CD4-positive, alpha-beta memory T cell (primary cell): ENCODE measurements at regions of chr12 and their contacts with region 1.

Region 1: DNA sequence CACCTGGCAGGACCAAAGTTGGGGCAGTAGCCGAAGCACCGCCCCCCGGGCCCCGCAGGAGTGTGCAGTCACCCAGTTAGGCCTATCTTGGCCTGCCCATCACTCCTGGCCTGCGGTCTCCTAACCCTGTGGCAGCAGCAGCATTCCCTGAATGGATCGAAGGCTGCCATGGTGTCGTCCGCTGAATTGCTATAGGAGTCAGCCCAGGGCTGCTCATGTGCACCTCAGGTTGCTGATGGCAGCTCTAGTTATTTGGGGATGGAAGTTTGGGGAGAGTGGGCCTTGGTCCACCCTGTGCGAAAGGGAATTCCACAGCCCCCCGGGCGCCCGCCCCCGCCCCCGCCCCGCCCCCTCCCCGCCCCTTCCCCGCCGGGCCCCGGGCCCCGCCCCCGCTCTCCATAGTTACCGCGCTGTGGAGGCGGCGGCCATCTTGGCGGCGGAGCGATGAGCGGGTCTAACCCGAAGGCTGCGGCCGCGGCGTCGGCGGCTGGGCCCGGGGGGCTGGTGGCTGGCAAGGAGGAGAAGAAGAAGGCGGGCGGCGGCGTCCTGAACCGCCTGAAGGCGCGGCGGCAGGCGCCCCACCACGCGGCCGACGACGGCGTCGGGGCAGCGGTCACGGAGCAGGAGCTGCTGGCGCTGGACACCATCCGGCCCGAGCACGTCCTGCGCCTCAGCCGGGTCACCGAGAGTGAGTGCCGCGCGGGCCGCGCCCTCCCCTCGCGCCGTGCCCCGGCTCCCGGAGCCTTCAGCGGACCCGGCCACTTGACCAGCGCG is at the start of gene UNC119B:
- DNase-seq: peak; percentile 66 to 78 (median 70)
- H3K4me3 ChIP-seq: peak within 1 kb of the TSS; percentile 49 to 68
- H3K4me3 Mint-ChIP-seq: peak within 1 kb of the TSS; percentile 89 to 96 (median 94)
- H3K27ac ChIP-seq: peak within 1 kb of the TSS; percentile 78
- H3K27ac Mint-ChIP-seq: peak within 1 kb of the TSS; percentile 83 to 98 (median 93)
- H3K4me1 ChIP-seq: peaks cover 26% of the 10 kb centered on the region
- H3K4me1 Mint-ChIP-seq: peaks cover 17 to 41% (median 32%) of the 10 kb centered on the region in 4 donors
- H3K27me3 ChIP-seq: no peaks in the 10 kb centered on the region
- H3K27me3 Mint-ChIP-seq: no peaks in the 10 kb centered on the region
- total RNA-seq, gene UNC119B: 28.7 to 29.1 TPM

Region 2: DNA sequence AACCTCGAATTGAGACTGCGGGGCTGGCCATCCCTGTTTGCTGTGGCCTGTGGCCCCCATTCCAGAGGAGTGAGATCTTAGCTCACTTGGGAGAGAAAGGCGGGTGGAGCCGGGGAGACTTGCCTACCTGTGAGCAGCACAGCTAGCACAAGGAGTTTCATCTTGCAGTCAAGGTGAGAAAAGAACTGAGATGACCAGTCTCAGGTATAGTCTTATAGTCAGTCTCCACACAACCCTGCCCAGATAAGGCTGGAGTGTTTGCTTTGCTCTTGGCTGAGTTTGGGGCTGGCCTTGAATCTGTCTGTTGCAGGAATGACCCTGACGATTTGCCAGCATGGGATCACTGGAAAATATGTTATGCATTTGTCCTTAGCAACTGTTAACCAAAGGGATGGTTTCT is 382.6 kb before region 1 on chr12 and contains the start of gene PLA2G1B:
- CTCF ChIA-PET with region 1: no interaction called
- POLR2A ChIA-PET with region 1: no interaction called
- intact Hi-C with region 1: loop called (anchors 5 kb)
- DNase-seq: no peak
- H3K4me3 ChIP-seq: no peak within 1 kb of the TSS
- H3K4me3 Mint-ChIP-seq: peak within 1 kb of the TSS in 1 of 8 donors; percentile 10
- H3K27ac ChIP-seq: no peak within 1 kb of the TSS
- H3K27ac Mint-ChIP-seq: no peak within 1 kb of the TSS
- H3K4me1 ChIP-seq: no peaks in the 10 kb centered on the region
- H3K4me1 Mint-ChIP-seq: peaks cover 3 to 8% (median 6%) of the 10 kb centered on the region in 4 donors
- H3K27me3 ChIP-seq: no peaks in the 10 kb centered on the region
- H3K27me3 Mint-ChIP-seq: peaks cover 1 to 3% of the 10 kb centered on the region in 2 donors
- total RNA-seq, gene PLA2G1B: not detected

Region 3: DNA sequence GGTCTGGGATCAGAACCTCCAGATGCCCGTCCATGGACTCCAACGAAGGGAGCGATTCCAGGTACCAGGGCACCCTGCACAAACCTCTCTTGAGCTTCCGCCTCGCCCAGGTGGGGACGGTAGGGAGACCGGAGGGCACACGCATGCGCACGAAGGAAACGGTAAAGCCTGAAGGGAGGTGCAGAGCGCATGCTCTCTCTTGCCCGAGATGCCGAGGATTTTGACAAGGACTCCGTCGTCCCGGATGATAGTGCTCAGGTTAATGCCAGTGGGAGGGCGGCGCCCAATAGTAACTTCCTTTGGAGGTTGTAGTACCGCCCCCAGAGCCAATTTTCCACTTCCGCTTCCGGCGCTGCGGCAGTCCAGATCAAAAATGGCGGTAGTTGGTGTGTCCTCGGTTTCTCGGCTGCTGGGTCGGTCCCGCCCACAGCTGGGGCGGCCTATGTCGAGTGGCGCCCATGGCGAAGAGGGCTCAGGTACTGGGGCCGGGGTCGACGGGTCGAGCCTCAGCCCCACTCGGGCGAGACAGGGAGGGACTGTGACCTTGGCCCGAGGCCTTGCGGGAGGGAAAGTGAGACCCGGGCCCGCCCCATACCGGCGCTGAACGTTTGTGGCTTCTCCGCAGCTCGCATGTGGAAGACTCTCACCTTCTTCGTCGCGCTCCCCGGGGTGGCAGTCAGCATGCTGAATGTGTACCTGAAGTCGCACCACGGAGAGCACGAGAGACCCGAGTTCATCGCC is 272.3 kb before region 1 on chr12 and contains the start of gene COX6A1:
- CTCF ChIA-PET with region 1: no interaction called
- POLR2A ChIA-PET with region 1: no interaction called
- intact Hi-C with region 1: loop called (anchors 10 kb)
- DNase-seq: peak; percentile 94 to 99 (median 98)
- H3K4me3 ChIP-seq: peak within 1 kb of the TSS; percentile 52 to 70
- H3K4me3 Mint-ChIP-seq: peak within 1 kb of the TSS; percentile 92 to 99 (median 96)
- H3K27ac ChIP-seq: peak within 1 kb of the TSS; percentile 76
- H3K27ac Mint-ChIP-seq: peak within 1 kb of the TSS; percentile 86 to 99 (median 96)
- H3K4me1 ChIP-seq: peaks cover 26% of the 10 kb centered on the region
- H3K4me1 Mint-ChIP-seq: peaks cover 18 to 31% (median 27%) of the 10 kb centered on the region in 4 donors
- H3K27me3 ChIP-seq: no peaks in the 10 kb centered on the region
- H3K27me3 Mint-ChIP-seq: peaks cover under 1 to 3% of the 10 kb centered on the region in 2 donors
- total RNA-seq, gene COX6A1: 144 to 158 TPM

Region 4: DNA sequence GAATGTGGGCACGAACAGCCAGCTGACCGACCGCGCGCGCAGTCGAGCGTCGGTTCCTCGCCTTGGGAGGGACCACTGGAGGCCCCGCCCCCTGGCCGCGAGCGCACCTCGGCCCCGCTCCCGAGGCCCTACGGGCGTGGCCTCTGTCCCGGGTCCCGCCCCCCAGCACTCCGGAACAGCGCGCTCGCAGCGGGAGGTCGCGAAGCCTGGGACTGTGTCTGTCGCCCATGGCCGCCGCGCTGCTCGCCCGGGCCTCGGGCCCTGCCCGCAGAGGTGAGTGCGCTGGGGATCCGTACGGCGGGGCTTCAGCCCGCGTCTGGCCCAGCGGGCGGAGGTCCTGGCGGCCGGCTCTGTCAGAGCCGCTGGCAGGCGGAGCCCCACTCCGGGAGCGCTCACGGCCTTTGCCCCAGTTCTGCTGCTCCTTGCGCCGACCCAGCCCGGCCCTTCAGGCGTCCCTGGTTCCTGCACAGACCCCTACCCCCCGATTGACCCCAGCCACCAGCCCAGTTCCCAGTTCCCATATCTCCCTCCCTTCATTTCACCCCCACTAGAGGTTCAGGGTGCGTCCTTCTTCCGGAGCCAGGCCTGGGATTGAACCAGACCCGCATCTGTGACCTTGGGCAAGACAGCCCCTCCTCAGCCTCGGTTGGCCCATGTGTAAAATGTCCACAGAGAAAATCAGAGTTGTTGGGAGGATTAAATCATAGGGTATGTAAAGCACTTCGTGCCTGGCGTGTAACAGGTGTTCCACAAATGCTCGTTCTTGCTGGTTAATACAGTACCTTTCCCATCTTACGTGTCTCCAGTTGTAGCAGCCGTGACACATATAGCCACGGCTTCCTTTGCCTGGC is 15.7 kb after region 1 on chr12 and contains the start of gene ACADS:
- CTCF ChIA-PET with region 1: interaction called, 5 read pairs
- POLR2A ChIA-PET with region 1: interaction called, 5 read pairs
- intact Hi-C with region 1: loop called (anchors 1 kb)
- DNase-seq: peak; percentile 84 to 87 (median 86)
- H3K4me3 ChIP-seq: peak within 1 kb of the TSS; percentile 20 to 71
- H3K4me3 Mint-ChIP-seq: peak within 1 kb of the TSS; percentile 90 to 95 (median 91)
- H3K27ac ChIP-seq: peak within 1 kb of the TSS; percentile 56
- H3K27ac Mint-ChIP-seq: peak within 1 kb of the TSS; percentile 72 to 94 (median 90)
- H3K4me1 ChIP-seq: peaks cover 16% of the 10 kb centered on the region
- H3K4me1 Mint-ChIP-seq: peaks cover 13 to 30% (median 20%) of the 10 kb centered on the region in 4 donors
- H3K27me3 ChIP-seq: no peaks in the 10 kb centered on the region
- H3K27me3 Mint-ChIP-seq: no peaks in the 10 kb centered on the region
- total RNA-seq, gene ACADS: 14.9 to 17.1 TPM

Region 5: GRCh38 chr12:120971299-120972179 is 261.3 kb after region 1 on chr12:
- CTCF ChIA-PET with region 1: interaction called, 4 read pairs
- POLR2A ChIA-PET with region 1: no interaction called
- intact Hi-C with region 1: loop called (anchors 10 kb)
- DNase-seq: peak in 4 of 5 donors; percentile 59 to 68 (median 62)
- H3K4me3 ChIP-seq: no peak overlapping the region
- H3K4me3 Mint-ChIP-seq: no peak overlapping the region
- H3K27ac ChIP-seq: no peak overlapping the region
- H3K27ac Mint-ChIP-seq: peak overlapping the region in 2 of 7 donors; percentile 37 to 51
- H3K4me1 ChIP-seq: peaks cover 3% of the 10 kb centered on the region
- H3K4me1 Mint-ChIP-seq: peaks cover 6 to 9% (median 6%) of the 10 kb centered on the region in 4 donors
- H3K27me3 ChIP-seq: no peaks in the 10 kb centered on the region
- H3K27me3 Mint-ChIP-seq: no peaks in the 10 kb centered on the region

Region 6: DNA sequence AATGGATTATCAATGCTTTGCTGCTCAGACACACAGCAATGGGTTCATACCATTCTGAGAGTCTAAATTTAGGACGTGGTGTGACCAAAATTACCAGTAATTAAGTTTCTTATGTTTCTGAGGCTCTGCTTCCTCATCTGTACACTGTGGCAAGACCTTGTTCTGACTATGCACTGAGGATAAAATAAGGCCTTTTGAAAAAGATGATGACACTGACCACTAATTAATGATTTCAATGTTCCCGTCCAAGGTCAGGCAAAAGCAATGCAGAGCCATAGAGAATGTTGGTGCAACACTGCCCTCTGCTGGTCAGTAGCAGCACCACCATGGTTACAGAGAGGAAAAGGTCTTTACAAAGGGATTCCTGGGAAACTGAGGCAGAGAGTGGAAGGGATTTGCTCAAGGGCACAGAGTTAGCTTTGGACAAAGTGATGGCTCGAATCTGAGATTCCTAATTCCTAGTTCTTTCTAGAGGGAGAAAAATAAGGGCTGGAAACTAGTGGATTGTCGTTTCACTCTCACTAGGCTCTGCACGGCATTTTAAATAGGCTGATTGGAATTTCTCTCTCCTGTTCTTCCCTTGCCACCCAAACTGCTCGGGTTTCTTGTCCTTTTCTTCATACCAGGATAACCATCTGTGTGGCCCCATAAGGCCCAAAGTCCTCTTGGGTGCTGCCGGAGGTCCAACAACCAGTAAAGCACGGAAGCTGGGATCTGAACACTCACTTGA is 400.2 kb after region 1 on chr12:
- CTCF ChIA-PET with region 1: no interaction called
- POLR2A ChIA-PET with region 1: no interaction called
- intact Hi-C with region 1: loop called (anchors 10 kb)
- DNase-seq: peak in 4 of 5 donors; percentile 50 to 56 (median 54)
- H3K4me3 ChIP-seq: no peak overlapping the region
- H3K4me3 Mint-ChIP-seq: no peak overlapping the region
- H3K27ac ChIP-seq: no peak overlapping the region
- H3K27ac Mint-ChIP-seq: peak overlapping the region in 2 of 7 donors; percentile 2 to 3
- H3K4me1 ChIP-seq: no peaks in the 10 kb centered on the region
- H3K4me1 Mint-ChIP-seq: peaks cover 0 to 5% (median 4%) of the 10 kb centered on the region in 4 donors
- H3K27me3 ChIP-seq: no peaks in the 10 kb centered on the region
- H3K27me3 Mint-ChIP-seq: no peaks in the 10 kb centered on the region